ENCODE measurements at regions of chr2 and their contacts with region 1.

Region 1: GRCh38 chr2:173205375-173205774 is 129.7 kb downstream of the MAP3K20 start:
- DNase-seq: no peak
- H3K4me3 ChIP-seq: no peak overlapping the region
- H3K27ac ChIP-seq: no peak overlapping the region
- H3K4me1 ChIP-seq: peaks cover 8% of the 10 kb centered on the region
- H3K27me3 ChIP-seq: no peaks in the 10 kb centered on the region
- CTCF ChIP-seq: no peak

Region 2: GRCh38 chr2:173785813-173786212 is 580.4 kb after region 1 on chr2:
- CTCF ChIA-PET with region 1: no interaction called
- POLR2A ChIA-PET with region 1: interaction called, 18 read pairs
- intact Hi-C with region 1: no loop called
- DNase-seq: no peak
- H3K4me3 ChIP-seq: no peak overlapping the region
- H3K27ac ChIP-seq: no peak overlapping the region
- H3K4me1 ChIP-seq: no peaks in the 10 kb centered on the region
- H3K27me3 ChIP-seq: peaks cover 40% of the 10 kb centered on the region; the same call in 1 of the 2 replicates
- CTCF ChIP-seq: no peak

Measured in PC-9 (cell line).